Activated CD4-positive, alpha-beta T cell treated with anti-CD3 and anti-CD28 coated beads, Interleukin-2, amount 10 ng/mL, durations not matched to agents 24 days and 14 days (primary cell): ENCODE measurements at regions of chr20 and their contacts with region 1.

Region 1: DNA sequence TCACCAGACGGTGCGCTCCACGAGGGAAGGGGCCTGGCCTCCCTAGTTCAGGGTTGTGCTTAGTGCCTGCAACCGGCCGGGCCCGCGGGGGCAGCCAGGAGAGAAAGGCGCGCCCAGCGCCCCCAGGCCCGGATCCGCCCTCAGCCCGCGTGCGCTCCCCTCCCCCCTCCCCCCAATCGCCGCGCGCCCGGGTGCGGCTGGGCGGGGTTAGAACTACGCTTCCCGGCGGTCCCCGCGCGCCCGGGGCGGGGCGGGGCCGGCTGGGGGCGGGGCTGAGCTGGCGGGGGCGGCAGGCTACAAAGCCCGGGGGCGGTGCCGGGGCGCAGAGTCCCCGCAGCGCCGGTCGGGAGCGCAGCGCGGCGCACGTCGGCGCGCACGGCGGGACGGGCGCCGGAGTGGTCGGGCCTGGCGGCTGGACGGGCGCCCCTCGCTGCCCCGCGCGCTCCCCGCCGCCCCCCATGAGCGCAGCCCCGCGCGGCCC is at the start of gene RBM38:
- DNase-seq: peak; percentile 93
- H3K4me3 Mint-ChIP-seq: peak within 1 kb of the TSS; percentile 88
- H3K27ac Mint-ChIP-seq: peak within 1 kb of the TSS; percentile 98
- H3K4me1 Mint-ChIP-seq: peaks cover 33% of the 10 kb centered on the region
- H3K27me3 Mint-ChIP-seq: no peaks in the 10 kb centered on the region
- total RNA-seq, gene RBM38: 100 and 103 TPM in 2 replicates

Region 2: GRCh38 chr20:57374931-57375651 is 16.0 kb before region 1 on chr20:
- intact Hi-C with region 1: no loop called
- DNase-seq: no peak
- H3K4me3 Mint-ChIP-seq: no peak overlapping the region
- H3K27ac Mint-ChIP-seq: peak overlapping the region; percentile 24
- H3K4me1 Mint-ChIP-seq: peaks cover 6% of the 10 kb centered on the region
- H3K27me3 Mint-ChIP-seq: no peaks in the 10 kb centered on the region

Region 3: DNA sequence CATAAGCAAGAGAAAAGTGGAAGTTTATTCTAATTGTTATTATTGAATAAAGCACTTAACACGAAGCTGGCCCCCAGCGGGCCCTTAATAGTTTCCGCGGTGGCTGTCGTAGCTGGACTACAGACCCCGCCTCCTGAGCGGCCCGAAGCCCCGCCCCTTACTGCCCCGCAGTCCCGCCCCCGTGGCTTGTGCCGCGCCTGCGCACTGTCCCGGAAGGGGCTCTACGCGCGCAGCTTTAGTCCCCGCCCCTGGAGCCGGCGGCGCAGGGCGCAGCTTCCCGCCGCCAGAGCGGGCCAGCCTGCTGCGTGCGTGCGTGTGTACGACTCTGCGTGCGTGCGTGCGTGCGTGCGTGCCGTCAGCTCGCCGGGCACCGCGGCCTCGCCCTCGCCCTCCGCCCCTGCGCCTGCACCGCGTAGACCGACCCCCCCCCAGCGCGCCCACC is 997.8 kb after region 1 on chr20 and contains the start of gene VAPB:
- intact Hi-C with region 1: loop called (anchors 5 kb)
- DNase-seq: peak; percentile 99
- H3K4me3 Mint-ChIP-seq: peak within 1 kb of the TSS; percentile 89
- H3K27ac Mint-ChIP-seq: peak within 1 kb of the TSS; percentile 93
- H3K4me1 Mint-ChIP-seq: peaks cover 30% of the 10 kb centered on the region
- H3K27me3 Mint-ChIP-seq: peaks cover 12% of the 10 kb centered on the region
- total RNA-seq, gene VAPB: 35.0 and 36.5 TPM in 2 replicates

Region 4: DNA sequence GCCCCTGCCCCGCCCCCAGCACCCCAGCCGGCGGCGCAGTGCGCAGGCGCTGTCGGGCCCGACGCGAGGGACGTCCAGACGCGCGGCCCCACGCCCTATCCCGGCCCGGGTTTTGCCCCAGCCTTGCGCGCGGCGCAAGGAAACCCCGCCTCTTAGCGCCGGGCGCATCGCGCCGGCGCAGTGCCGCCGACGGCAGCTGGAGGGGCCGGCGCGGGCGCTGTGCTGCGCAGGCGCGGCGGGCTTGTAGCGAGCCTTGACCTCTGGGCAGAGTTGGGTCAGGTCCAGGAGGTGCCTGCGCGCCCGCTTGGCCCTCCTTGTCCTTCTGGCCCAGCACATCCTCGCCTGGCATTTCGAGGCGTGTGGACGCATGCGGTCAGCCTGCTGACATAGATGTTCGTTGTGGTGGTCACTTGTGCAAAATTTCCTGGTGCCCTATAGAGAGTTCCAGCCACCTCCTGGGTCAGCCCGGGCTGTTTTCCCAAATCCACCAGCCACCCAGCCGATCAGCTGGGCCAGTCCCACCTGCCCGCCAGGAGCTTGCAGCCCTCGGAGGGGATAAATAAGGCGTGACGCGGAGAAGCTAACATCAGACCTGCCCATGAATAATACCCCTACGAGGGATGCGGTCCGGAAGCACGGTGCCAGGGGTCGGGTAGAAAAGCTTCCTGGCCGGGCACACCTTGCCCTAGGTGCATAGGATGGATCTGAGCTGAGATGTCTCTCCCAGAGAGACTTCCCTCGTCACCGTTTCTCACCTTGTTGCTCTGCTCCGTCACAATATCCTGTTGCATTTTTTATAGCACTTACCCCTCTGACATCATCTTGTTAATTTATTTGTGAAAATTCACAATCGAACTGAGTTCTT is 1651.9 kb after region 1 on chr20:
- intact Hi-C with region 1: loop called (anchors 10 kb)
- DNase-seq: peak; percentile 99
- H3K4me3 Mint-ChIP-seq: peak overlapping the region; percentile 93
- H3K27ac Mint-ChIP-seq: peak overlapping the region; percentile 96
- H3K4me1 Mint-ChIP-seq: peaks cover 42% of the 10 kb centered on the region
- H3K27me3 Mint-ChIP-seq: no peaks in the 10 kb centered on the region